CD4-positive, alpha-beta T cell (primary cell): ENCODE measurements at regions of chr7 and their contacts with region 1.

Region 1: GRCh38 chr7:28908775-28909174 is 49.4 kb downstream of the TRIL start:
- DNase-seq: no peak
- ATAC-seq: no peak
- H3K4me3 ChIP-seq: no peak overlapping the region
- H3K4me3 Mint-ChIP-seq: no peak overlapping the region
- H3K27ac ChIP-seq: no peak overlapping the region
- H3K27ac Mint-ChIP-seq: no peak overlapping the region
- H3K4me1 ChIP-seq: no peaks in the 10 kb centered on the region
- H3K4me1 Mint-ChIP-seq: no peaks in the 10 kb centered on the region
- H3K27me3 ChIP-seq: peaks cover 3 to 7% of the 10 kb centered on the region in 2 experiments
- H3K27me3 Mint-ChIP-seq: peaks cover 8% of the 10 kb centered on the region
- CTCF ChIP-seq: no peak

Region 2: DNA sequence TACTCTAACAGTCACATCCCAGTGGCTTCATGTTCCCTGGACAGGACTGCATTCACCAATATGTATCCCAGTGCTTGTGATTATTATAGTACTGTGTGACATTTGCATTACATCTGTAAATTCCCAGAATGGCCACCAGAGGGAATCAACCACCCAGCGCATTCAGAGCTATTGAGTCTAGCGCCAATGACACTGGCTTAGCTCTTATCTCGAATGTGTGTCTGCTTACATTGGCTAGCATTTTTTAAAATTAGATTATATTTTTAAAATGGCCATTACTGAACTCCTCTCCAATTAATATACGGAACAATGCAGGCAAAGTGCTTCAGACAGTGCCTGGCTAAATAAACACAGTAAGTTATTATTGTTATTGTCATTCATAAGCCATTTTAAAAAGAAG is 13.0 kb after region 1 on chr7:
- CTCF ChIA-PET with region 1: interaction called, 12 read pairs
- POLR2A ChIA-PET with region 1: interaction called, 3 read pairs
- intact Hi-C with region 1: no loop called
- DNase-seq: peak in 7 of 14 experiments; percentile 4 to 68 (median 39)
- ATAC-seq: peak; percentile 89
- H3K4me3 ChIP-seq: no peak overlapping the region
- H3K4me3 Mint-ChIP-seq: no peak overlapping the region
- H3K27ac ChIP-seq: no peak overlapping the region
- H3K27ac Mint-ChIP-seq: no peak overlapping the region
- H3K4me1 ChIP-seq: no peaks in the 10 kb centered on the region
- H3K4me1 Mint-ChIP-seq: peaks cover 14% of the 10 kb centered on the region
- H3K27me3 ChIP-seq: no peaks in the 10 kb centered on the region
- H3K27me3 Mint-ChIP-seq: no peaks in the 10 kb centered on the region
- CTCF ChIP-seq: peak; percentile 79

Region 3: GRCh38 chr7:28926871-28927597 is 18.3 kb after region 1 on chr7:
- CTCF ChIA-PET with region 1: interaction called, 12 read pairs
- POLR2A ChIA-PET with region 1: interaction called, 3 read pairs
- intact Hi-C with region 1: no loop called
- DNase-seq: peak; percentile 3 to 79 (median 26)
- ATAC-seq: peak; percentile 91
- H3K4me3 ChIP-seq: peak overlapping the region; percentile 58
- H3K4me3 Mint-ChIP-seq: peak overlapping the region; percentile 91
- H3K27ac ChIP-seq: no peak overlapping the region
- H3K27ac Mint-ChIP-seq: no peak overlapping the region
- H3K4me1 ChIP-seq: peaks cover 7% of the 10 kb centered on the region
- H3K4me1 Mint-ChIP-seq: peaks cover 20% of the 10 kb centered on the region
- H3K27me3 ChIP-seq: no peaks in the 10 kb centered on the region
- H3K27me3 Mint-ChIP-seq: peaks cover 16% of the 10 kb centered on the region
- CTCF ChIP-seq: peak; percentile 78